Activated CD4-positive, alpha-beta T cell treated with anti-CD3 and anti-CD28 coated beads, Interleukin-2, amount 10 ng/mL, durations not matched to agents 24 days and 14 days (primary cell): ENCODE measurements at regions of chr6 and their contacts with region 1.

Region 1: DNA sequence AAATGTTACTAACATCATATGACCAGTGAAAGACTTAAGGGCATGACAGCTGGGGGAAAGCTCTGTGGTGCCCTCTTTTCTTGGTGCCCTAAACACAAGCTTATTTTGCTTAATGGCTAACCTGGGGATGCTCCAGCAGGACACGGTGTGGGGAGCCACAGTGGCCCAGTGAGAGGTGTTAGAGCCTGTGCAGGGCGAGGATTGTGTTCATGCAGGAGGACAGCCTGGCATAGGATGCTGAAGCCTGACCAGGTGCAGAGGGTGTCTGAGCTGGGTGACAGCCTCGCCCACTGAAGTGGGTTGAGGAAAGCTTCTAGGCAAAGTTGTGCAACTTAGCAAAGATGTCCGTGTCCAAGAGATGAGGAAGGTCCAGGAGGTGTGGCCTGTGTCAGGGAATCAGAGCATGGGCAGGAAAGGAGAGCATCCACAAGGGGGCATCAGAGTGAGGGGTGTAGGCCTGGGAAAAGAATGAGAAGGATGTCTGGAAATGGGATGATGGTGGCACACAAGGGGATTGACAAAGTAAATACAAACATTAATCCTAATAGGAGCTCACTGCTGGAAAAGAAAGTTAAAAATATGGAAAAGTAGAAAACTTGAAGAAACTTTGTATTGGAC is 33.9 kb downstream of the SLC17A4 start:
- DNase-seq: peak; percentile 82
- H3K4me3 Mint-ChIP-seq: no peak overlapping the region
- H3K27ac Mint-ChIP-seq: no peak overlapping the region
- H3K4me1 Mint-ChIP-seq: no peaks in the 10 kb centered on the region
- H3K27me3 Mint-ChIP-seq: no peaks in the 10 kb centered on the region

Region 2: GRCh38 chr6:25882051-25882496 is 93.7 kb after region 1 on chr6:
- intact Hi-C with region 1: loop called (anchors 5 kb)
- DNase-seq: peak; percentile 81
- H3K4me3 Mint-ChIP-seq: peak overlapping the region; percentile 89
- H3K27ac Mint-ChIP-seq: peak overlapping the region; percentile 76
- H3K4me1 Mint-ChIP-seq: peaks cover 8% of the 10 kb centered on the region
- H3K27me3 Mint-ChIP-seq: peaks cover 9% of the 10 kb centered on the region

Region 3: DNA sequence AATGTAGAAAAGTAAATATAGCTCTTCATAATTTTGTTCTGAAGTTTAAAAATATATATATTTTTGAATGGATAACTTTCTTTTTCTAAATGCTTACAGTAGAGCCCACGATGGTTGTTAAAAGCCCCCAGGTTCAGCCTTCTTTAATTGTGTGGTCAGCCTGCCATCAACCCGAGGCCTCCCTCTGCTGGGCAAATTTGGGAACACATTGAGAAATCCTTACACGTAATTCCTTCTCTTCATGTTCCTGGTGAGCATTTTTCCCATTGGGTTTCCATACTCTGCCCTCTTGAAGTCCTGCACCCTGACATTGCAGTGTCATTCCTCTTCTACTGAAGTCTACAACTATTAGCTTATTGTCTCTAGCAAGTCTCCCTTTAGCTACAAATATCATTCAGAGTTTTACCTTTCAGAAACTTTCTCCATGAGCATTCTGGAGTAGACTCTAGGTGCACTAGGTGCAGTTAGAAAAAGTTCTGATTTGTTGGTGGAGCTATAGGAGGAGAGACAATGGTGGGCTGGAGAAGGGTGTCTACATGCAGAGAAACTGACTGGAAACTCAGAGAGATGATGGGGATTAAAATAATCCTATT is 214.8 kb after region 1 on chr6:
- intact Hi-C with region 1: loop called (anchors 1 kb)
- DNase-seq: peak; percentile 84
- H3K4me3 Mint-ChIP-seq: no peak overlapping the region
- H3K27ac Mint-ChIP-seq: no peak overlapping the region
- H3K4me1 Mint-ChIP-seq: peaks cover 14% of the 10 kb centered on the region
- H3K27me3 Mint-ChIP-seq: no peaks in the 10 kb centered on the region